ENCODE measurements at regions of chr2 and their contacts with region 1.

Region 1: GRCh38 chr2:102442967-102443828 is 20.2 kb downstream of the IL18RAP start:
- DNase-seq: peak; percentile 70
- ATAC-seq: peak; percentile 82
- H3K4me3 Mint-ChIP-seq: peak overlapping the region; percentile 7
- H3K27ac Mint-ChIP-seq: peak overlapping the region; percentile 68
- H3K4me1 Mint-ChIP-seq: peaks cover 10% of the 10 kb centered on the region
- H3K27me3 Mint-ChIP-seq: peaks cover 3% of the 10 kb centered on the region

Region 2: GRCh38 chr2:102020596-102021181 is 422.5 kb before region 1 on chr2:
- CTCF ChIA-PET with region 1: interaction called, 14 read pairs
- DNase-seq: peak; percentile 85
- ATAC-seq: peak; percentile 93
- H3K4me3 Mint-ChIP-seq: no peak overlapping the region
- H3K27ac Mint-ChIP-seq: no peak overlapping the region
- H3K4me1 Mint-ChIP-seq: peaks cover 7% of the 10 kb centered on the region
- H3K27me3 Mint-ChIP-seq: peaks cover 5% of the 10 kb centered on the region

Region 3: GRCh38 chr2:102235491-102235890 is 207.7 kb before region 1 on chr2:
- CTCF ChIA-PET with region 1: interaction called, 39 read pairs
- DNase-seq: peak; percentile 56
- ATAC-seq: peak; percentile 41
- H3K4me3 Mint-ChIP-seq: no peak overlapping the region
- H3K27ac Mint-ChIP-seq: no peak overlapping the region
- H3K4me1 Mint-ChIP-seq: peaks cover 41% of the 10 kb centered on the region
- H3K27me3 Mint-ChIP-seq: no peaks in the 10 kb centered on the region

Region 4: GRCh38 chr2:102251042-102251848 is 192.0 kb before region 1 on chr2:
- CTCF ChIA-PET with region 1: interaction called, 16 read pairs
- DNase-seq: peak; percentile 67
- ATAC-seq: peak; percentile 75
- H3K4me3 Mint-ChIP-seq: peak overlapping the region; percentile 75
- H3K27ac Mint-ChIP-seq: peak overlapping the region; percentile 32
- H3K4me1 Mint-ChIP-seq: peaks cover 40% of the 10 kb centered on the region
- H3K27me3 Mint-ChIP-seq: peaks cover 21% of the 10 kb centered on the region

Region 5: DNA sequence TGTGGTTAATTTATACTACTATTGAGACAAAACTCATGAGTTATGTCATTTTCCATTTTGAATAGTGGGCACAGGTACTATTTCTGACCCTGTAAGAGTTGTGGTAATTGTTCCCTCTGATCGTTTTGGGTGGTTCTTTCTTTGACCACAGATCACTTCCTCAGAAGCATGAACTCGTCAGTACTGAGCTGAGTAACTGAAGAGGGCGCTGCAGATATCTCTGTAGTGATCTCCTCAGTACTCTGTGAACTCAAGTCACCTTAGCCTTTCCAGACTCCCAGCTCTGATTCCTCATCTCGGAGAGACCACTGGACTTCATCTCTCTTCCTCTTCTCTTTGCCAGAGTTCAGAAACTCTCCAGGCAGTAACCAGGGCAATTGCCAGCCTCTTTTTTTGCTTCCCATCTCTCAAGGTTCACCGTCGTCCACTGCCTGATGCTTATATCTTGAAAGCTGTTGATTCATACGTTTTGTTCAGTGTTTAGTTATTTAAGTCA is 141.3 kb before region 1 on chr2:
- CTCF ChIA-PET with region 1: interaction called, 12 read pairs
- DNase-seq: peak; percentile 82
- ATAC-seq: peak; percentile 99
- H3K4me3 Mint-ChIP-seq: peak overlapping the region; percentile 12
- H3K27ac Mint-ChIP-seq: peak overlapping the region; percentile 60
- H3K4me1 Mint-ChIP-seq: peaks cover 29% of the 10 kb centered on the region
- H3K27me3 Mint-ChIP-seq: peaks cover 10% of the 10 kb centered on the region

Region 6: DNA sequence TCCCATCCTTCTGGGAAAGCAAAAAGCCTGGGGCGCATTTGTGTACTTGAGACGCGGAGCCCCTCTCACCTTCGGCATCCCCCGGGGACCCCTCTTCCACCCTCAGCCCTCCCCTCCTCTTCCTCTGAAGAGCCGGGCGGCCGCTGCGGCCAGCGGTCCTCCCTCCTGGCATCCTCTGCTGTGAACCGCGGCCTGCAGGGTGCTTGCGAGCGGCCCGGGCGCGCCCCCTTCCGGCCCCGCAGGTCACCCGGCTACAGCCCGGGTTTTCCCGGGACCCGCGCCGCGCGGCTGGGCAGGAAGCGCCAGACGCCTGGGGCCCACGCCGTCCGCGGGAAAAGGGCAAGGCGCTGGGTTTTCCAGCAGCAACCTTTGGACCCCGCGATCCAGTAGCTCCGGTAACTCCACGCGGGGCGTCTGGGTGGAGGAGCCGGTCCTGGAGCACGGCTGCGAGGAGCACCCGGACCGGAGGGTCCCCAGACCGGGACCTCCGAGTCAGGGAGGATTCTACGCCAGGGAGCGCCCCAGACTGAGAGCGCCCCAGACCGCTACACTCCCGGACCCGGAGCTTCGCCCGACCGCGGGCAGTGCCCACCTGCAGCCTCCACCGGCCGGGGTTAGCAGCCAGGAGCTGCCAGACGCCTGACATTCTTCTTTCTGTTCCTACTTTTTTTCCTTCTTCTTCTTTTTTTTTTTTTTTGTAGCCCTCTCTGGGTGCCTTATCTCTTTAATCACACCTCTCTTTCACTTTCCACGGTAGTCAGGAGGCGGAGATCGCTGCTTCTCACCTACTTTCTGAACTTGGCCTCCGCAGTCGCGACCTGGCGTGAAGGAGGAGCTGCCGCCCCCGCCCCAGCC is 87.4 kb before region 1 on chr2 and contains the start of gene IL18R1:
- CTCF ChIA-PET with region 1: interaction called, 35 read pairs
- DNase-seq: peak; percentile 78
- ATAC-seq: peak; percentile 93
- H3K4me3 Mint-ChIP-seq: peak within 1 kb of the TSS; percentile 98
- H3K27ac Mint-ChIP-seq: peak within 1 kb of the TSS; percentile 92
- H3K4me1 Mint-ChIP-seq: peaks cover 38% of the 10 kb centered on the region
- H3K27me3 Mint-ChIP-seq: peaks cover 4% of the 10 kb centered on the region
- total RNA-seq, gene IL18R1: 19.8 to 25.9 TPM

Region 7: DNA sequence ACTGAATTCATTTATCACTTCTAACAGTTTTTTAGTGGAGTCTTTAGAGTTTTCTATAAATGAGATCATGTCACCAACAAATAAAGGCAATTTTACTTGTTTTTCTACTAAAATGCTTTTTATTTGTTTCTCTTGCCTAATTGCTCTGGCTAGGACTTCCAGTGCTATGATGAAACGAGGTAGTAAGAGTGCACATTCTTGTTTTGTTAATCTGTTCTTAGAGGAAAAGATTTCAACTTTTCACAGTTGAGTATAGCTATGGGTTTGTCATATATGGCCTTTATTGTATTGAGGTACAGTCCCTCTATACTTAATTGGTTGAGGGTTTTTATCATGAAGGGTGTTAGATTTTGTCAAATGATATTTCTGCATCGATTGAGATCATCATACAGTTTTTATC is 14.6 kb before region 1 on chr2:
- CTCF ChIA-PET with region 1: interaction called, 14 read pairs
- DNase-seq: no peak
- ATAC-seq: no peak
- H3K4me3 Mint-ChIP-seq: no peak overlapping the region
- H3K27ac Mint-ChIP-seq: peak overlapping the region; percentile 3
- H3K4me1 Mint-ChIP-seq: peaks cover 47% of the 10 kb centered on the region
- H3K27me3 Mint-ChIP-seq: no peaks in the 10 kb centered on the region

Region 8: GRCh38 chr2:102487761-102488466 is 44.7 kb after region 1 on chr2:
- CTCF ChIA-PET with region 1: no interaction called
- DNase-seq: no peak
- ATAC-seq: no peak
- H3K4me3 Mint-ChIP-seq: no peak overlapping the region
- H3K27ac Mint-ChIP-seq: no peak overlapping the region
- H3K4me1 Mint-ChIP-seq: peaks cover 11% of the 10 kb centered on the region
- H3K27me3 Mint-ChIP-seq: peaks cover 15% of the 10 kb centered on the region

Measured in activated CD8-positive, alpha-beta memory T cell treated with anti-CD3 and anti-CD28 coated beads, Interleukin-2, amount 10 ng/mL, durations not matched to agents 7 days and 5 days (primary cell).